Activated CD4-positive, alpha-beta memory T cell treated with anti-CD3 and anti-CD28 coated beads, Interleukin-2, amount 10 ng/mL, durations not matched to agents 7 days and 5 days (primary cell): ENCODE measurements at regions of chr14 and their contacts with region 1.

Region 1: DNA sequence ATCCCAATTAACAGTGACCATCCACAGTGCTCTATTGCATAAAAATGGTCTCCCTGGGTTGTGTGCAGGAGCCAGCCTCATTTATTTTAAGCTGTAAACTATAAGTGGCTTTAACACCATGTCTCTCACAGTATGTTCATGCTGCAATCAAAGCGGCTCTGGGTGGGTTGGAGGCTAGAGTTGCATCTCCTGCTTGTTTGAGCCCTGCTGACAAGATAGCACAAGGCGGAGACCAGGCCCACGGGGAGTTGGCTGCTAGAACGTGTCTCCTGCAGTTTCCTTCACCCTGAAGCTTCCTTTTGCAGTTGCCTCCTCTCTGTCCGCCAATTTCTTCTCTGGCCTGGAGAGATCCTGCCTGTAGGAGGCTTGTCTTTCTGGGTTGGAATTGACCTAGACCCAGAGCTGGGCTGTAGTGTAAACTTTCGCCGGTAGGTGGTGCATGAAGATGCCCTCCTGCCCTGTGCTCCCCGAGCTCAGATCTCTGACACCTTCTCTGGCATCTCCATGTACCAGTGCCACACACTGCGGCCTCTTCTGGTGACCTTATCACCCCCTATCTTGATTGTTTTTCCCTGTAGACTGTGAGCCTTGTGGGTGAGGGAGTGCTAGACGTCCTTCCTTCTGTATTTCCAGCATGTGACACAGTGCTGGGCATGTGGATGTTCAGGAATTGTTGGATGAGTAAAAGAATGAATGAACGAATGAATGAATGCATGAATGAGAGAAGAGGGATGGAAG is 10.3 kb downstream of the OTUB2 start:
- DNase-seq: peak; percentile 84
- H3K4me3 Mint-ChIP-seq: no peak overlapping the region
- H3K27ac Mint-ChIP-seq: no peak overlapping the region
- H3K4me1 Mint-ChIP-seq: peaks cover 9% of the 10 kb centered on the region
- H3K27me3 Mint-ChIP-seq: no peaks in the 10 kb centered on the region

Region 2: GRCh38 chr14:94009767-94010166 is 26.7 kb before region 1 on chr14:
- CTCF ChIA-PET with region 1: interaction called, 9 read pairs
- POLR2A ChIA-PET with region 1: interaction called, 11 read pairs
- DNase-seq: no peak
- H3K4me3 Mint-ChIP-seq: no peak overlapping the region
- H3K27ac Mint-ChIP-seq: peak overlapping the region; percentile 61
- H3K4me1 Mint-ChIP-seq: peaks cover 69% of the 10 kb centered on the region
- H3K27me3 Mint-ChIP-seq: peaks cover 5% of the 10 kb centered on the region

Region 3: GRCh38 chr14:94026173-94026888 is 10.2 kb before region 1 on chr14 and contains the start of gene OTUB2:
- CTCF ChIA-PET with region 1: interaction called, 46 read pairs
- POLR2A ChIA-PET with region 1: interaction called, 10 read pairs
- DNase-seq: peak; percentile 99
- H3K4me3 Mint-ChIP-seq: peak within 1 kb of the TSS; percentile 78
- H3K27ac Mint-ChIP-seq: peak within 1 kb of the TSS; percentile 71
- H3K4me1 Mint-ChIP-seq: peaks cover 68% of the 10 kb centered on the region
- H3K27me3 Mint-ChIP-seq: no peaks in the 10 kb centered on the region
- total RNA-seq, gene OTUB2: 7.3 to 7.9 TPM

Region 4: DNA sequence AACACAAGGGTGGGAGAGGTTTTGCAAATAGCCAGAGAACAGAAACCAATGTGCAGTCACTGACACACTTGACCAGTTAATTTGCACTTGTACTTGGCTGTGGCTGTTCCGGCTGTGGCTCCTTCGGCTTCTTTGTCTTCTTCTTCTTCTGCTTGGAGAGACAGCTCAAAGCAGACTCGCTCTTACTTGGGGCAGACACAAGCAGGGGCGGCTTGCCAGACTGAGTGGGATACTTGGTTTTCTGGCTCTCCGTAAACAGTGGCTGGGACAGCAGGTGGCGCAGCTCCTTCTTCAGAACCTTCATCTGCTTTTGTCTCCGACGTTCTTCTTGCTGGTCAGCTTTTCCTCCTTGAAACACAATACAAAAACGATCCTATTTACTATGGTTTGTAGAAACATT is 14.6 kb after region 1 on chr14:
- CTCF ChIA-PET with region 1: interaction called, 22 read pairs
- POLR2A ChIA-PET with region 1: interaction called, 4 read pairs
- DNase-seq: peak; percentile 16
- H3K4me3 Mint-ChIP-seq: no peak overlapping the region
- H3K27ac Mint-ChIP-seq: peak overlapping the region; percentile 5
- H3K4me1 Mint-ChIP-seq: peaks cover 39% of the 10 kb centered on the region
- H3K27me3 Mint-ChIP-seq: no peaks in the 10 kb centered on the region

Region 5: DNA sequence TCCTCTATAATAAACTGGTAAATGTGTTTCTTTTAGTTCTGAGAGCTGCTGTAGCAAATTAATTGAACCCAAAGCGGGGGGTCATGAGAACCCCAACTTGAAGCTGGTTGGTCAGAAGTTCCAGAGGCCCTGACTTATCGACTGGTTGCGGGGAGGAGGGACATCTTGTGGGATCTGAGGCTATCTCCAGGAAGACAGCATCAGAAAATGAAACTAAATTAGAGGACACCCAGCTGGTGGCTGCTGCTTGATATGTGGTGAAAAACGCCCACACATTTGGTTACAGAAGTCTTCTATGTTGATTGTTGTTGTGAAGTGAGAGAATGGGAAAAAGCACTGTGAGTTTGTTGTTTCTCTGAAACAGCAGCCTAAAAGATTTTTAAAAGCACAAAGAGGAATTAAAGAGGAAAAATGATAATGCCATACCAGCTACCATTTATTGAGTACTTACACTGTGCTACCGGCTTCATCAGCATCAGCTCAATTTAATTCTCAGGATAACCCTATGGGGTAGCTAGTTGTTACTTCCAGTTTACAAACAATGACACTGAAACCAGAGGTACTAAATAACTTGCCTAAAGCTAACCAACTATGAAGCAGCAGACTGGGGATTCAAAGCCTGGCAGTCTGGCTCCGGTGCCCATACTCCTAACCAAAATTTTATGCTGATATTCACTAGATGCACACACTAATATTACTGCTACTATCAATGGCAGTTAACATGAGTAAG is 20.3 kb after region 1 on chr14:
- CTCF ChIA-PET with region 1: interaction called, 22 read pairs
- POLR2A ChIA-PET with region 1: interaction called, 4 read pairs
- DNase-seq: peak; percentile 56
- H3K4me3 Mint-ChIP-seq: peak overlapping the region; percentile 7
- H3K27ac Mint-ChIP-seq: peak overlapping the region; percentile 83
- H3K4me1 Mint-ChIP-seq: peaks cover 65% of the 10 kb centered on the region
- H3K27me3 Mint-ChIP-seq: no peaks in the 10 kb centered on the region

Region 6: GRCh38 chr14:94080471-94081289 is 44.2 kb after region 1 on chr14 and contains the start of gene DDX24:
- CTCF ChIA-PET with region 1: interaction called, 30 read pairs
- POLR2A ChIA-PET with region 1: interaction called, 4 read pairs
- DNase-seq: peak; percentile 98
- H3K4me3 Mint-ChIP-seq: peak within 1 kb of the TSS; percentile 98
- H3K27ac Mint-ChIP-seq: peak within 1 kb of the TSS; percentile 98
- H3K4me1 Mint-ChIP-seq: peaks cover 61% of the 10 kb centered on the region
- H3K27me3 Mint-ChIP-seq: no peaks in the 10 kb centered on the region
- total RNA-seq, gene DDX24: 210 to 216 TPM

Region 7: DNA sequence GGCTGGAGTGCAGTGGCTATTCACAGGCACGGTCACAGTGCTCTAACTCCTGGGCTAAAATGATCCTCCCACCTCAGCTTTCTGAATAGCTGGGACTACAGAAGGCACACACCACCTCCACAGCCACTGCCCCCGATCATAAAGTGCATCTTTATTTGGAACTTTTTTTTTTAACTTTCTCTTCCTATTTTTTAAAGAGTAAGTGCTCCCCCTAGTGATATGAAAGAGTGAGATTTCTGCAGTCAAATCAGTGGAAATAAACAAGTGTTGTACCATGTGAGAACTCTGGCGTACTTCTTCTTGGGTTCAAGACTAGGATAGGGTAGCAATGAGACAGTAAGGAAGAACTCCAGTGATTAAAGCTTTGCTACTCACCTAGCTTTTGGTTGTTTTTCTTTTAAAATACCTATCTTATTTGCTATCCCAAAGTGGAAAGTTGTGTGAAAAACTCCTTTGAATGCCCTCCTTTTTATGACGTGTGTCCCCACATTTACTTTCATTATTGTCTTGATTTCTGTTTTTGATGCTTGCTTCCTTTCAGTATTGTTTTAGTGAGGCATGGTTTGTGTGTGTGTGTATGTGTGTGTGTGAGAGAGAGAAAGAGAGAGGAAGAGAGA is 144.3 kb after region 1 on chr14:
- CTCF ChIA-PET with region 1: interaction called, 33 read pairs
- POLR2A ChIA-PET with region 1: no interaction called
- DNase-seq: no peak
- H3K4me3 Mint-ChIP-seq: peak overlapping the region; percentile 59
- H3K27ac Mint-ChIP-seq: peak overlapping the region; percentile 47
- H3K4me1 Mint-ChIP-seq: peaks cover 24% of the 10 kb centered on the region
- H3K27me3 Mint-ChIP-seq: peaks cover 10% of the 10 kb centered on the region